CD4-positive, alpha-beta memory T cell (primary cell): ENCODE measurements at regions of chr2 and their contacts with region 1.

Region 1: DNA sequence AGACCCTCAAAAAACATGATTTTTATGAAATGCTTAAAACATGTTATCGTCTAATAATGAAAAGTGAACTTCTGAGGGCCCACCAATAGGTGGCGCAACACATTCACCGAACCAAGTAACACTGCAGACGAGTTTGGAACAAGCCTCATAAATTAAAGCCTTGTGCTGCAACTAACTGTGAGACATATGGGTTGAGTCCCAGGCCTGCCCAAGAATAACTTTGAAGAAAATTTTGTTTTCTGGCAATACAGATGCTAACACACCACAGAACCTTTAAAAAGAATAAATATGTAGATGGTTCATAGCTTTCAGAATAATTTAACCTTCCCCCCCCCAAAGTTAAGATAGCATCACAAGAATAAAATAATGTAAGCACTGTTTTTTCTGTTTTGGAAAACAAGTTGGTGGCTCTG is 285.8 kb downstream of the RNF144A start:
- DNase-seq: peak; percentile 39 to 54 (median 48)
- H3K4me3 ChIP-seq: no peak overlapping the region
- H3K4me3 Mint-ChIP-seq: no peak overlapping the region
- H3K27ac ChIP-seq: no peak overlapping the region
- H3K27ac Mint-ChIP-seq: no peak overlapping the region
- H3K4me1 ChIP-seq: no peaks in the 10 kb centered on the region
- H3K4me1 Mint-ChIP-seq: no peaks in the 10 kb centered on the region
- H3K27me3 ChIP-seq: no peaks in the 10 kb centered on the region
- H3K27me3 Mint-ChIP-seq: peaks cover 0 to 2% of the 10 kb centered on the region in 2 donors

Region 2: GRCh38 chr2:7593360-7593759 is 390.3 kb after region 1 on chr2:
- CTCF ChIA-PET with region 1: no interaction called
- POLR2A ChIA-PET with region 1: no interaction called
- intact Hi-C with region 1: no loop called
- DNase-seq: no peak
- H3K4me3 ChIP-seq: no peak overlapping the region
- H3K4me3 Mint-ChIP-seq: no peak overlapping the region
- H3K27ac ChIP-seq: no peak overlapping the region
- H3K27ac Mint-ChIP-seq: no peak overlapping the region
- H3K4me1 ChIP-seq: no peaks in the 10 kb centered on the region
- H3K4me1 Mint-ChIP-seq: peaks cover 0 to 4% (median 3%) of the 10 kb centered on the region in 4 donors
- H3K27me3 ChIP-seq: no peaks in the 10 kb centered on the region
- H3K27me3 Mint-ChIP-seq: no peaks in the 10 kb centered on the region

Region 3: DNA sequence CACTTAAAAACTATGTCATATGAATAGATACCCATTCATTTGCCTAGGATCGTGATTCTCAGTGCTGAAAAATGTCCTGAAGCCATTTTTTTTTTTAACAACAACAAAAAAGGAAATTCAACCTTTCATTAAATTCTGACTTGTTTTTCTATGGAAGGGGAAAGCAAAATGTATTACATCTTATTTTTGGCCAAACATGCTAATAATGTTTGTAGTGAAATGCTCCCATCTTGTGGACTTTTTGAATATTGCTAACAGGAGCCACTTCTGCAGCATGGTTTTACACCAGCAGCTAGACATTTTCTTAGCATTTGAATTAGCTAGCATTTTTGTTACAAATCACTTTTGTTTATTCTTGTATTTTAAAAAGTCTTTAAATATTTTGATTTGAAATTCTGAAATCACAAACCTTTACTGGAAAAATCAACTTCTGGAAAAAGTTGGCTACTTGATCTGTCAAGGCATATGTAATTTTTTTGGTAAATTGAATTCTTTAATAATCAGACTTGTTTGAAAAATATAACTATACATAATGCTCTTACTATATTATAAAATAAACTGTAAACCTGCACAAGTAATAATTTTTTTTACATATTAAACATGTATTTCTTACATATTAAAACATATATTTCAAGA is 1558.6 kb after region 1 on chr2:
- CTCF ChIA-PET with region 1: no interaction called
- POLR2A ChIA-PET with region 1: no interaction called
- intact Hi-C with region 1: loop called (anchors 1 kb)
- DNase-seq: peak in 3 of 5 donors; percentile 3 to 7 (median 6)
- H3K4me3 ChIP-seq: no peak overlapping the region
- H3K4me3 Mint-ChIP-seq: no peak overlapping the region
- H3K27ac ChIP-seq: no peak overlapping the region
- H3K27ac Mint-ChIP-seq: no peak overlapping the region
- H3K4me1 ChIP-seq: no peaks in the 10 kb centered on the region
- H3K4me1 Mint-ChIP-seq: no peaks in the 10 kb centered on the region
- H3K27me3 ChIP-seq: no peaks in the 10 kb centered on the region
- H3K27me3 Mint-ChIP-seq: no peaks in the 10 kb centered on the region